ENCODE measurements at regions of chrX and their contacts with region 1.

Region 1: GRCh38 chrX:136268051-136269048 is 17.1 kb upstream of the MAP7D3 start:
- DNase-seq: peak in 1 of 2 experiments; percentile 22
- H3K4me3 ChIP-seq: no peak overlapping the region
- H3K4me3 Mint-ChIP-seq: no peak overlapping the region
- H3K27ac Mint-ChIP-seq: no peak overlapping the region
- H3K4me1 ChIP-seq: no peaks in the 10 kb centered on the region
- H3K4me1 Mint-ChIP-seq: no peaks in the 10 kb centered on the region
- H3K27me3 ChIP-seq: no peaks in the 10 kb centered on the region
- H3K27me3 Mint-ChIP-seq: no peaks in the 10 kb centered on the region
- CTCF ChIP-seq: peak; percentile 55 to 64

Region 2: GRCh38 chrX:136028251-136028984 is 239.9 kb before region 1 on chrX:
- CTCF ChIA-PET with region 1: interaction called, 6 read pairs
- POLR2A ChIA-PET with region 1: no interaction called
- intact Hi-C with region 1: loop called (anchors 1 kb)
- DNase-seq: peak in 1 of 2 experiments; percentile 8
- H3K4me3 ChIP-seq: no peak overlapping the region
- H3K4me3 Mint-ChIP-seq: no peak overlapping the region
- H3K27ac Mint-ChIP-seq: no peak overlapping the region
- H3K4me1 ChIP-seq: no peaks in the 10 kb centered on the region
- H3K4me1 Mint-ChIP-seq: no peaks in the 10 kb centered on the region
- H3K27me3 ChIP-seq: no peaks in the 10 kb centered on the region
- H3K27me3 Mint-ChIP-seq: no peaks in the 10 kb centered on the region
- CTCF ChIP-seq: peak in 1 of 2 experiments; percentile 13

Region 3: GRCh38 chrX:136162831-136163570 is 105.3 kb before region 1 on chrX:
- CTCF ChIA-PET with region 1: interaction called, 3 read pairs
- POLR2A ChIA-PET with region 1: no interaction called
- intact Hi-C with region 1: loop called (anchors 1 kb)
- DNase-seq: peak; percentile 44 to 59
- H3K4me3 ChIP-seq: no peak overlapping the region
- H3K4me3 Mint-ChIP-seq: no peak overlapping the region
- H3K27ac Mint-ChIP-seq: no peak overlapping the region
- H3K4me1 ChIP-seq: no peaks in the 10 kb centered on the region
- H3K4me1 Mint-ChIP-seq: no peaks in the 10 kb centered on the region
- H3K27me3 ChIP-seq: no peaks in the 10 kb centered on the region
- H3K27me3 Mint-ChIP-seq: peaks cover 11% of the 10 kb centered on the region
- CTCF ChIP-seq: peak; percentile 41 to 71

Region 4: DNA sequence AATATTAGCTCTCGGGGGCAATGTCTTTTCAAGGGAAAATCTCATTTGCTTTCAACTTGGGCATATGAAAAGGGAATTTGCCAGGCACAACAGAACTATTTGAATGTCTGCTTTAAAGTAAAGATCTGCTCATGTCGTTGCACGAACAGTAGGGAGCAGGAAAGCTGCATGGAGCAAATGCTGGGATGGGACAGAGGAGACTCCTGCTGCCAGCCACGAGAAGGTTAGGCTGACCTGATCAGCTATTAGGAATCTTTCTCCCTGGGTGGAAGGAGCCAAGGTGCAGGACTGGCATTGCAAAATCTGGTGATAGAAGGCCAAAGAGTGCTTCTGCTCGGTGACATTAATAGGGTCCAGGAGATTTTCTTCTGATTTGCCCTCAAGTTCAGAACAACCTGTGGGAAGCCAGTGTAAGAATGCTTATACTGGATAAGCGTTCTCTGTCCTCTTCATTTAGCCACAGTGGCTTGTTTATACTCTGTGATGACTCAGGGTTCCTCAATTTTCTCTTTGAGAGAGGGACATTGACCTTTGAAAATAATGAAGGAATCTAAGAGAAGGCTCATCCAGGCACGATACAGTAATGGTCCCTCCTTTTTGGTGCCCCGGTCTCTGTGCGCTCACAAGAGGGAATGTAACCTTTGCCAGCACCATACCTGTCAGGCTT is 98.1 kb before region 1 on chrX:
- CTCF ChIA-PET with region 1: no interaction called
- POLR2A ChIA-PET with region 1: no interaction called
- intact Hi-C with region 1: loop called (anchors 1 kb)
- DNase-seq: peak in 1 of 2 experiments; percentile 12
- H3K4me3 ChIP-seq: no peak overlapping the region
- H3K4me3 Mint-ChIP-seq: no peak overlapping the region
- H3K27ac Mint-ChIP-seq: no peak overlapping the region
- H3K4me1 ChIP-seq: no peaks in the 10 kb centered on the region
- H3K4me1 Mint-ChIP-seq: no peaks in the 10 kb centered on the region
- H3K27me3 ChIP-seq: no peaks in the 10 kb centered on the region
- H3K27me3 Mint-ChIP-seq: peaks cover 10% of the 10 kb centered on the region
- CTCF ChIP-seq: no peak

Region 5: GRCh38 chrX:136209016-136209738 is 59.2 kb before region 1 on chrX:
- CTCF ChIA-PET with region 1: no interaction called
- POLR2A ChIA-PET with region 1: no interaction called
- intact Hi-C with region 1: loop called (anchors 10 kb)
- DNase-seq: peak in 1 of 2 experiments; percentile 12
- H3K4me3 ChIP-seq: no peak overlapping the region
- H3K4me3 Mint-ChIP-seq: no peak overlapping the region
- H3K27ac Mint-ChIP-seq: no peak overlapping the region
- H3K4me1 ChIP-seq: no peaks in the 10 kb centered on the region
- H3K4me1 Mint-ChIP-seq: no peaks in the 10 kb centered on the region
- H3K27me3 ChIP-seq: no peaks in the 10 kb centered on the region
- H3K27me3 Mint-ChIP-seq: no peaks in the 10 kb centered on the region
- CTCF ChIP-seq: peak in 1 of 2 experiments; percentile 27

Region 6: DNA sequence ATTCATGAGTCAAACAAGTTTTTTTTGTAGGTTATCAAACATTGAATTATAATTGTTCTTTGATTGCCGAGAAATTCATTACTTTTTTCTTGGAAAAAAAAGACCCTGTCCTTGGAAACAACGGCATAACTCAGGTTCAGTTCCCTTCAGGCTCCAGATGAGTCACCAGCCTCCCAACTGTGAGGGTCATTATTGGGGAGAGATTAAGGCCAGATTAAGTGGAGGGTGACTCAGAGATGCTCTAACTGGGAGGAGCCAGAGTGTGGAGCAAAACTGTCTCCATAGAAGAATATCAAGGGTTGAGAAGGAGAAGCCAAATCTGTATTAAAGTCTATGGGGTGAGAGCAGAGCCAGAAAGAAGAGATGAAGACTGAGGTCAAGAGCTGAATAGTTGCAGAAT is 42.1 kb after region 1 on chrX:
- CTCF ChIA-PET with region 1: no interaction called
- POLR2A ChIA-PET with region 1: no interaction called
- intact Hi-C with region 1: no loop called
- DNase-seq: no peak
- H3K4me3 ChIP-seq: no peak overlapping the region
- H3K4me3 Mint-ChIP-seq: no peak overlapping the region
- H3K27ac Mint-ChIP-seq: no peak overlapping the region
- H3K4me1 ChIP-seq: no peaks in the 10 kb centered on the region
- H3K4me1 Mint-ChIP-seq: no peaks in the 10 kb centered on the region
- H3K27me3 ChIP-seq: no peaks in the 10 kb centered on the region
- H3K27me3 Mint-ChIP-seq: peaks cover 9% of the 10 kb centered on the region
- CTCF ChIP-seq: no peak

Region 7: GRCh38 chrX:136395271-136395670 is 126.9 kb after region 1 on chrX:
- CTCF ChIA-PET with region 1: no interaction called
- POLR2A ChIA-PET with region 1: no interaction called
- intact Hi-C with region 1: no loop called
- DNase-seq: no peak
- H3K4me3 ChIP-seq: no peak overlapping the region
- H3K4me3 Mint-ChIP-seq: no peak overlapping the region
- H3K27ac Mint-ChIP-seq: no peak overlapping the region
- H3K4me1 ChIP-seq: no peaks in the 10 kb centered on the region
- H3K4me1 Mint-ChIP-seq: no peaks in the 10 kb centered on the region
- H3K27me3 ChIP-seq: no peaks in the 10 kb centered on the region
- H3K27me3 Mint-ChIP-seq: peaks cover 5% of the 10 kb centered on the region
- CTCF ChIP-seq: no peak

Region 8: GRCh38 chrX:136694431-136695087 is 426.2 kb after region 1 on chrX:
- CTCF ChIA-PET with region 1: interaction called, 4 read pairs
- POLR2A ChIA-PET with region 1: no interaction called
- intact Hi-C with region 1: loop called (anchors 1 kb)
- DNase-seq: peak in 1 of 2 experiments; percentile 10
- H3K4me3 ChIP-seq: no peak overlapping the region
- H3K4me3 Mint-ChIP-seq: no peak overlapping the region
- H3K27ac Mint-ChIP-seq: no peak overlapping the region
- H3K4me1 ChIP-seq: no peaks in the 10 kb centered on the region
- H3K4me1 Mint-ChIP-seq: no peaks in the 10 kb centered on the region
- H3K27me3 ChIP-seq: no peaks in the 10 kb centered on the region
- H3K27me3 Mint-ChIP-seq: peaks cover 11% of the 10 kb centered on the region
- CTCF ChIP-seq: peak; percentile 47 to 60